MCF 10A (cell line): ENCODE measurements at regions of chr2 and their contacts with region 1.

Region 1: GRCh38 chr2:121197369-121198091 is 87.5 kb downstream of the TFCP2L1 start:
- DNase-seq: peak; percentile 98
- H3K4me3 Mint-ChIP-seq: peak overlapping the region; percentile 47
- H3K27ac Mint-ChIP-seq: peak overlapping the region; percentile 100
- H3K4me1 Mint-ChIP-seq: peaks cover 64% of the 10 kb centered on the region
- H3K27me3 Mint-ChIP-seq: no peaks in the 10 kb centered on the region
- CTCF ChIP-seq: no peak

Region 2: GRCh38 chr2:121095257-121096080 is 102.1 kb before region 1 on chr2:
- CTCF ChIA-PET with region 1: interaction called, 7 read pairs
- POLR2A ChIA-PET with region 1: interaction called, 24 read pairs
- intact Hi-C with region 1: no loop called
- DNase-seq: peak; percentile 81
- H3K4me3 Mint-ChIP-seq: no peak overlapping the region
- H3K27ac Mint-ChIP-seq: no peak overlapping the region
- H3K4me1 Mint-ChIP-seq: peaks cover 26% of the 10 kb centered on the region
- H3K27me3 Mint-ChIP-seq: no peaks in the 10 kb centered on the region
- CTCF ChIP-seq: peak; percentile 94

Region 3: DNA sequence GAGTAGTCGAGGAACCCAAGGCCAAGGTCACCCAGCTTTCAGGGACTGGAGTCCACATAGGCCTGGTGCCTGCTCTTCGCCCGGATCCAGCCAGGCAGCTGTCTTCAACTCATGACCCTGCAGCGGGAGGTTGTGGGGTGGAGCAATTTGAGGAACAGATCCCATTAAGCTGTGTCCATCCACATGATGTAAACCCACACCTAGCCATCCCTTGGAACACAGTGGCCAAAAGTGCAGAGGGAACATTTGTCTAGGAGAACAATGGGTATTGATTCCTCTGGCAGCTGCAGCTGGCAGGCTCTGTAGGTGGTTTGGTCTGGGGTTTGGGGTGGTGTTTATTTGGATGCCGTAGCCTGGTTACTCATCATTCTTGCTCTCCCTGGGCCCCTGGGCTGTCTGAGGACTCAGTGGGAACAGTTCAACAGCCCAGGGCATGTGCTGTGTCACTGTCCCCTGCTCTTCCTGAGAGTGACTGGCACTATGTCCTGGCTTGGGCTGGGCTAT is 11.9 kb before region 1 on chr2:
- CTCF ChIA-PET with region 1: interaction called, 19 read pairs
- POLR2A ChIA-PET with region 1: interaction called, 54 read pairs
- intact Hi-C with region 1: no loop called
- DNase-seq: peak; percentile 93
- H3K4me3 Mint-ChIP-seq: peak overlapping the region; percentile 16
- H3K27ac Mint-ChIP-seq: peak overlapping the region; percentile 49
- H3K4me1 Mint-ChIP-seq: peaks cover 49% of the 10 kb centered on the region
- H3K27me3 Mint-ChIP-seq: no peaks in the 10 kb centered on the region
- CTCF ChIP-seq: no peak

Region 4: GRCh38 chr2:121220995-121221394 is 23.5 kb after region 1 on chr2:
- CTCF ChIA-PET with region 1: interaction called, 4 read pairs
- POLR2A ChIA-PET with region 1: interaction called, 11 read pairs
- intact Hi-C with region 1: no loop called
- DNase-seq: peak; percentile 62
- H3K4me3 Mint-ChIP-seq: no peak overlapping the region
- H3K27ac Mint-ChIP-seq: peak overlapping the region; percentile 40
- H3K4me1 Mint-ChIP-seq: peaks cover 6% of the 10 kb centered on the region
- H3K27me3 Mint-ChIP-seq: no peaks in the 10 kb centered on the region
- CTCF ChIP-seq: no peak

Region 5: DNA sequence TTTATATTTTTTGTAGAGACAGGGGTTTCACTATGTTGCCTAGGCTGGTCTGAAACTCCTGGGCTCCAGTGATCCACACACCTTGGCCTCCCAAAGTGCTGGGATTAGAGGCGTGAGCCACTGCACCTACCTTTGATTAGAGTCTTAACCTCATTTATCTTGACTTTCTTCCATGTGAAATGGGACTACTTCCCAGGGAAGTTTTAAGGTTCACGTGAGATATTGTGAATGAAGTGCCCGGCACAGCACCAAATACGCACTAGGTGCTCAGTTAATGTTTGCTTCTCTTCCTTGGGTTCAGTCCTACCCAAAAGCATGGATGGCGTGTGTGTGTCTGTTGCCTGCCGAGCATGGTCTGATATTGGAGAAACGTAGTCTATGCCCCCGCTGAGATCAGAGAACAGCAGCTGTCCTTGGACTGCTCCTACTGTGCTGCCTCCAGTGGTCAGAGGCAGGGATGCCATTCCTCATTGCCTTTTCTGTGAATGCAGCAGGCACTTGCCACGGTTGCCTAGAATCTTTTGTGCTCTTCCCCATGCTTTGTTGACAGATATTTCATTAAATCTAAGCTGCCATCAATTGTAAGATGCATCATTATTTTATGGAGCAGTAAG is 99.8 kb after region 1 on chr2:
- CTCF ChIA-PET with region 1: no interaction called
- POLR2A ChIA-PET with region 1: no interaction called
- intact Hi-C with region 1: loop called (anchors 5 kb)
- DNase-seq: peak; percentile 59
- H3K4me3 Mint-ChIP-seq: no peak overlapping the region
- H3K27ac Mint-ChIP-seq: no peak overlapping the region
- H3K4me1 Mint-ChIP-seq: peaks cover 11% of the 10 kb centered on the region
- H3K27me3 Mint-ChIP-seq: no peaks in the 10 kb centered on the region
- CTCF ChIP-seq: peak; percentile 47